OCI-LY7 (cell line): ENCODE measurements at regions of chr14 and their contacts with region 1.

Region 1: GRCh38 chr14:32202998-32203882 is at the start of gene RNU6-8:
- DNase-seq: peak; percentile 93
- H3K4me3 ChIP-seq: peak within 1 kb of the TSS; percentile 80
- H3K27ac ChIP-seq: peak within 1 kb of the TSS; percentile 31
- H3K4me1 ChIP-seq: peaks cover 39% of the 10 kb centered on the region
- CTCF ChIP-seq: no peak
- total RNA-seq, gene RNU6-8: not detected in 2 replicates

Region 2: GRCh38 chr14:30558675-30559555 is 1644.3 kb before region 1 on chr14 and contains the start of gene G2E3:
- CTCF ChIA-PET with region 1: no interaction called
- POLR2A ChIA-PET with region 1: no interaction called
- intact Hi-C with region 1: loop called (anchors 5 kb)
- DNase-seq: peak; percentile 92
- H3K4me3 ChIP-seq: peak within 1 kb of the TSS; percentile 91
- H3K27ac ChIP-seq: peak within 1 kb of the TSS; percentile 73
- H3K4me1 ChIP-seq: peaks cover 20% of the 10 kb centered on the region
- CTCF ChIP-seq: no peak
- total RNA-seq, gene G2E3: 22.3 and 22.7 TPM in 2 replicates

Region 3: DNA sequence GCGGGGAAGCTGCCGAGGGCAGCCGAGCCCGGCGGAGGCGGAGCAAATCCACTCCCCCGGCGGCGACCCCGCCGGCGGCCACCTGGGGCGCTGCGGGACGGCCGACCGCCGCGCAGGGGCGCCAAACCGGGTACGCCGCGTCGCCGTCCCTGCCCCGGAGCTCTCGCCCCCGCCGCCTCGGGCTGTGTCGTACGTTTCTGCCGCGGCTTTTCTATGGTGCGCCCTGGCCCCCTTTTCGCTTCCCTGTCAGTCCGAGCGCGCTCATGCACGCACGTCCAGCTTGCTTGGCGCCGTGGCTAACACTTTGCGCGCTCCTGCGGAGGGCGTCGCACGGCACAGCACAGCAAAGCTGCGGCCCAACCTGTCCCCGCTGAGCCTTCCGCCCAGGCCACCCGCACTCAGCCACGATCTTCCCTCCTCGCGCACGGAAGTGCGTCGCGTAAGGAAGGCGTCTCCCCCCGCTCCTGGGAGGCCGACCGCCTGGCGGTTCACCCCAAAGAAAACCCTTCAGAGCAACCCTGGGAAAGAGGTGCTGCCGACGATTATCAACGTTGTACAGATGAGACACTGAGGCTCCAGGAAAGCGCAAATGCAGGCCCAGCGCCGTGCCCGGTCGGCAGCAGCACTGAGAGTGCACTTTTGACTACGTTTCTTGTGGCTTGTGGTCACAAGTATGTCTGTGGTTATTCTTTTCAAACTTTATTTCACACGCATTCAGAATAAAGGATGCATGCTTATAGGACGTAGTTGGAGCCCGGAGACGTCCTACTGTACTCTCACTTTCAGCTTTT is 995.3 kb before region 1 on chr14 and contains the start of gene HECTD1:
- CTCF ChIA-PET with region 1: no interaction called
- POLR2A ChIA-PET with region 1: no interaction called
- intact Hi-C with region 1: loop called (anchors 5 kb)
- DNase-seq: peak; percentile 90
- H3K4me3 ChIP-seq: peak within 1 kb of the TSS; percentile 96
- H3K27ac ChIP-seq: peak within 1 kb of the TSS; percentile 88
- H3K4me1 ChIP-seq: peaks cover 23% of the 10 kb centered on the region
- CTCF ChIP-seq: peak; percentile 78
- total RNA-seq, gene HECTD1: 90.3 and 119 TPM in 2 replicates

Region 4: GRCh38 chr14:31561155-31561846 is 641.9 kb before region 1 on chr14 and contains the start of gene NUBPL:
- CTCF ChIA-PET with region 1: no interaction called
- POLR2A ChIA-PET with region 1: no interaction called
- intact Hi-C with region 1: loop called (anchors 5 kb)
- DNase-seq: peak; percentile 95
- H3K4me3 ChIP-seq: peak within 1 kb of the TSS; percentile 87
- H3K27ac ChIP-seq: peak within 1 kb of the TSS; percentile 38
- H3K4me1 ChIP-seq: peaks cover 5% of the 10 kb centered on the region
- CTCF ChIP-seq: no peak
- total RNA-seq, gene NUBPL: 9.0 and 15.1 TPM in 2 replicates

Region 5: DNA sequence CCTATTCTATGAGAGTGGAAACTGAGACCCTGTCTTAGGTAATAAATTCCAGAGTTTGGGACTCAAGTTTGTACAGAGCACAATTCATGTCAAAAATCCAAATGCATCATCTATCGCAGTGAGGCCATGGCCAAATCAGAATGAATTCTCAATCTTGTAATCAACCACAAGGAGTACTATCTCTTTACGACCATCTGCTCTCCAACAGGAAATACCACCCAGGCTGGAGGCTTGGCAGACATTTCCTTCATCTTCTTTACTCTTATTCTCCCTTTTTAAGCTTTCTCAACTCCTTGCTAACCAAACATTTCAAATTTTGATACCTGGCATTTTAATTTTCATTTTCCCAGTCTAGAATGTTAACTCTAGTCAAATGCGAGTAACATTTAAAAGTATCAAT is 34.0 kb before region 1 on chr14:
- CTCF ChIA-PET with region 1: no interaction called
- POLR2A ChIA-PET with region 1: no interaction called
- intact Hi-C with region 1: no loop called
- DNase-seq: no peak
- H3K4me3 ChIP-seq: no peak overlapping the region
- H3K27ac ChIP-seq: no peak overlapping the region
- H3K4me1 ChIP-seq: peaks cover 9% of the 10 kb centered on the region
- CTCF ChIP-seq: no peak

Region 6: GRCh38 chr14:32190672-32191071 is 12.6 kb before region 1 on chr14:
- CTCF ChIA-PET with region 1: no interaction called
- POLR2A ChIA-PET with region 1: interaction called, 5 read pairs
- intact Hi-C with region 1: loop called (anchors 1 kb)
- DNase-seq: no peak
- H3K4me3 ChIP-seq: no peak overlapping the region
- H3K27ac ChIP-seq: no peak overlapping the region
- H3K4me1 ChIP-seq: peaks cover 45% of the 10 kb centered on the region
- CTCF ChIP-seq: no peak

Region 7: DNA sequence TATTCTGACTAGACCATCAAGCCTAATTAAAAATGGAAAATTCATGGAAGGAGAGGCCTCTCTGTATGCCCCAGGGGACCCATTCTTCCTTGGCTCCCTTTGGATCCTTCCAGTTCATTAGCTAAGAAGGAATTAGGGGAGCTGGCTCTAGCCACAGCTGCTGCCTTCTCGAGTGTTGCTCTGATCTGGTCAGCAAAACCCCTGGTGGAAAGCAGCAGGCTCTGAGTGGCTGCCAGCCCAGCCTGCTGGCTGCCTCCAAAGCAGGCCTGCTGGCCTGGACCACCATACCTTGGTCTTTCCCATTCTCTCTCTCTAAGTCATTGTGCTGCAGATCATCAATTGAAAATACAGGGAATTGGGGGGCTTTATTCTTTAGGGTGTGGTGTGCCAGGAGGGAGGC is 96.9 kb after region 1 on chr14:
- CTCF ChIA-PET with region 1: no interaction called
- POLR2A ChIA-PET with region 1: no interaction called
- intact Hi-C with region 1: no loop called
- DNase-seq: no peak
- H3K4me3 ChIP-seq: no peak overlapping the region
- H3K27ac ChIP-seq: no peak overlapping the region
- H3K4me1 ChIP-seq: no peaks in the 10 kb centered on the region
- CTCF ChIP-seq: no peak